OCI-LY7 (cell line): ENCODE measurements at regions of chr1 and their contacts with region 1.

Region 1: GRCh38 chr1:111441573-111442192 is 7.4 kb downstream of the WDR77 start:
- DNase-seq: peak; percentile 79
- H3K4me3 ChIP-seq: no peak overlapping the region
- H3K27ac ChIP-seq: no peak overlapping the region
- H3K4me1 ChIP-seq: peaks cover 4% of the 10 kb centered on the region
- CTCF ChIP-seq: peak; percentile 94

Region 2: GRCh38 chr1:111422566-111423391 is 18.9 kb before region 1 on chr1:
- CTCF ChIA-PET with region 1: no interaction called
- POLR2A ChIA-PET with region 1: interaction called, 10 read pairs
- intact Hi-C with region 1: no loop called
- DNase-seq: no peak
- H3K4me3 ChIP-seq: no peak overlapping the region
- H3K27ac ChIP-seq: no peak overlapping the region
- H3K4me1 ChIP-seq: peaks cover 11% of the 10 kb centered on the region
- CTCF ChIP-seq: no peak